ENCODE measurements at regions of chr2 and their contacts with region 1.

Region 1: DNA sequence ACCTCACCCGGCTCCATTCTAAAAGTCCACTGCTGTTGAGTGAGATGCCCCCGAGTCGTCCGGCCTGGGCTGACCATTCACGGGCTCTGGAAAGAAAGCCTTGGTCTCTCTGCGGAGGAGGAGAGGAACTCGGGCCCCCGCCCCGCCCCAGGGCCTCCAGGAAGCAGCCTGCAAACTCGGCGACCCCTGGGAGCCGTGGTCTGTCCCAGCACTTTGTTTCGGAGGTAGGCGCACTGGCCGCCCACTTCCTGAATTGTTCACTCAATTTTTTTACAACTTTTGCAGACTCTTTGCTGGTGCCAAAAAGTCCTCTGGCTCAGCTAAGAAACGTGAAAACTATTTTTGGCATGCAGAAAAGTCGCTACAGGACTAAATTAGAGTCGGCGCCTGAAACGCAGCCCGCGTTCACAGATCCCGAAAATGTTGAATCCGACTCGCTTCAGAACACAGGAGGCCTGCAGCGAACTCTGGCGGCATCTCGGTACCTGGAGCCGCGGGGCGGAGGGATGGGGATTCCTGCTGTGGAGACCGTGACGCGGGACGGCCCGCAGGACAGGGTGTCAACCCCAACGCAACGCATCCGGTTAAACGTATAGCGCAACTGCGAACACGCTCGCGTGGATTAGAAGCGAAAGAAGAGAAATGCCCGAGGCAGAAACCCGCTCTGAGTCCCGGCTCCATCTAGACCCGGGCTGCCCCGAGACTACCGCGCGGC is 1.5 kb downstream of the PXDN start:
- DNase-seq: peak in 8 of 10 donors; percentile 46 to 81 (median 68)
- H3K4me3 ChIP-seq: peak overlapping the region; percentile 34 to 76 (median 60)
- H3K27ac ChIP-seq: peak overlapping the region in 25 of 59 donors; percentile 9 to 80 (median 64)
- H3K27me3 ChIP-seq: peaks cover 0 to 53% (median 17%) of the 10 kb centered on the region in 45 donors
- CTCF ChIP-seq: peak in 50 of 56 donors; percentile 12 to 64 (median 44)

Region 2: GRCh38 chr2:1591978-1592907 is 150.6 kb before region 1 on chr2:
- intact Hi-C with region 1: loop called (anchors 5 to 10 kb)
- DNase-seq: peak in 8 of 10 donors; percentile 24 to 61 (median 54)
- H3K4me3 ChIP-seq: peak overlapping the region in 4 of 59 donors; percentile 5 to 36 (median 26)
- H3K27ac ChIP-seq: no peak overlapping the region
- H3K27me3 ChIP-seq: peaks cover 0 to 36% (median 8%) of the 10 kb centered on the region in 45 donors
- CTCF ChIP-seq: peak in 52 of 56 donors; percentile 17 to 62 (median 42)

Region 3: DNA sequence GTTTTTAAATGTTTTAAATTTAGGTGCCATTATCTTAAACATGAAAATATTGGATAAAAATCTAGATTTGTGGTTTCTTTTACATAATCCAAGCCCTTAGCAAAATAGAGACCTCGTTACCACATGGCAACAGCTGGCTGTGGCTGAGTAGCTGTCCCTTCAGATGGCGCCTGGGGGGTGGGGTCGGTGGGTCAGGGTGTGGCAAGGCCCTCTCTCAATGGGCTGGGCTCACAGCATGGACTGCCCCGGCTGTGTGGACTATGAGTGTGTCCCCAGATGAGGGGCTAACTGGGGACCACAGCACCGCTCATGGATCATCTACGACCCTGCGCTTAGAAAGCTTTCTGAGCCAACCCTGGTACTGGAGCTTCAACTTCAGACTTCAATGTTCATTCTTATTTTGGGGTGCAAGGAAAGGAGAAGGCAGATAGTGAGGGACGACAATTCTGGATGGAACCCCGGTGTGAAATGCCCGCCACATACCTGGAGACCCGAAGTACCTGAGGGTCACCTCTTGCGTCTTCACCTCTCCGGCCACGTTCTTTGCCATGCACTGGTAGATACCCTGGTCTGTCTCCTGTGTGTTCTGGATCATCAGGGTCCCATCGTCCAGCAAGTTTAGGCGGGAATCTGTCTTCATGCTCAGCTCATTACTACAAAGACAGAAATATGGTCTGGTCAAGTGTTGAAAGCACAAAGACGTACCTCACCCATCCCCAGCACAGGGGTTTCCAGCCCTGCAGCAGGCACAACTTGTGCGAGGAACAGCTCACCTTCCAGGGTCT is 69.5 kb before region 1 on chr2:
- intact Hi-C with region 1: loop called in 1 of 2 experiments (anchors 5 kb)
- DNase-seq: peak in 1 of 10 donors; percentile 18
- H3K4me3 ChIP-seq: no peak overlapping the region
- H3K27ac ChIP-seq: no peak overlapping the region
- H3K27me3 ChIP-seq: peaks cover 0 to 4% (median 0%) of the 10 kb centered on the region in 45 donors
- CTCF ChIP-seq: no peak

Region 4: DNA sequence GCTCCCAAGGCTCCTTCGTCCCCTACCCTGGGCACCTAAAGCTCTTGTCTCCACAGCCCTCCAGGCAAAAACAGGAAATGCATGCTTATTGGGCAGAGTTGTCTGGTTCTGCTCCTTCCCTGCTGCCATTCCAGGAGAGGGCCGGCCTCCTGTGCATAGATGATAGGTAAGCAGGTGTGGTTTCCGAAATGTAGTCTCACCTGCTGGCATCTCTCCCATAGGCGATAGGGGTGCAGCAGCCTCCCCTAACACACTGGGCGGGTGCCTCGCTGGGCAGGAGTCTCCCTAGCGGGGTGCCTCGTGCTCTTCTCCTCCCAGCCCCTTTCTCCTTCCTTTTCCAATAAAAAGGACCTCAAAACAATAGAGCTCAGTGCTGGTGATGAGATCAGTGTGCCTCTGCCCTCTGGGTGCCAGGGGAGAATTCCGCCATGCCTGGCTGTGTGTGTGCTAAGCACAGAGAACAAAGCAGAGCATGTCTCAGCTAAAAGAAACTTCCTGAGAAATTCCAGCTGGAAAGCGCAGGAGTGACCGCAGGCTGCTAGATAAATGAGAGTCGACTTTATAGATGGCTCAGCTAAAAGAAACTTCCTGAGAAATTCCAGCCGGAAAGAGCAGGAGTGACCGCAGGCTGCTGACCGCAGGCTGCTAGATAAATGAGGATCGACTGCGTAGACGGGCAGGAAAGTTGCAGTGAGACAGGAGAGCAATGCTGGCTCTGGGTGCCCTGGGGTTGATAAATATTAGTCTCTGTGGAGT is 12.8 kb after region 1 on chr2:
- intact Hi-C with region 1: no loop called
- DNase-seq: peak in 4 of 10 donors; percentile 6 to 12 (median 8)
- H3K4me3 ChIP-seq: peak overlapping the region in 1 of 59 donors; percentile 2
- H3K27ac ChIP-seq: no peak overlapping the region
- H3K27me3 ChIP-seq: peaks cover 0 to 14% (median 0%) of the 10 kb centered on the region in 45 donors
- CTCF ChIP-seq: no peak

Measured in dorsolateral prefrontal cortex (tissue), 120 donors.